Activated CD4-positive, alpha-beta T cell treated with anti-CD3 and anti-CD28 coated beads, Interleukin-2, amount 10 ng/mL, durations not matched to agents 24 days and 14 days (primary cell): ENCODE measurements at regions of chr7 and their contacts with region 1.

Region 1: GRCh38 chr7:66075590-66076461 is at the start of gene ASL:
- DNase-seq: peak; percentile 98
- H3K4me3 Mint-ChIP-seq: peak within 1 kb of the TSS; percentile 89
- H3K27ac Mint-ChIP-seq: peak within 1 kb of the TSS; percentile 65
- H3K4me1 Mint-ChIP-seq: peaks cover 18% of the 10 kb centered on the region
- H3K27me3 Mint-ChIP-seq: peaks cover 2% of the 10 kb centered on the region
- total RNA-seq, gene ASL: 37.8 and 40.5 TPM in 2 replicates

Region 2: GRCh38 chr7:65872776-65873581 is 202.8 kb before region 1 on chr7 and contains the start of gene VKORC1L1:
- intact Hi-C with region 1: loop called (anchors 2 kb)
- DNase-seq: peak; percentile 98
- H3K4me3 Mint-ChIP-seq: peak within 1 kb of the TSS; percentile 87
- H3K27ac Mint-ChIP-seq: peak within 1 kb of the TSS; percentile 88
- H3K4me1 Mint-ChIP-seq: peaks cover 8% of the 10 kb centered on the region
- H3K27me3 Mint-ChIP-seq: peaks cover 1% of the 10 kb centered on the region
- total RNA-seq, gene VKORC1L1: 27.9 and 31.0 TPM in 2 replicates

Region 3: DNA sequence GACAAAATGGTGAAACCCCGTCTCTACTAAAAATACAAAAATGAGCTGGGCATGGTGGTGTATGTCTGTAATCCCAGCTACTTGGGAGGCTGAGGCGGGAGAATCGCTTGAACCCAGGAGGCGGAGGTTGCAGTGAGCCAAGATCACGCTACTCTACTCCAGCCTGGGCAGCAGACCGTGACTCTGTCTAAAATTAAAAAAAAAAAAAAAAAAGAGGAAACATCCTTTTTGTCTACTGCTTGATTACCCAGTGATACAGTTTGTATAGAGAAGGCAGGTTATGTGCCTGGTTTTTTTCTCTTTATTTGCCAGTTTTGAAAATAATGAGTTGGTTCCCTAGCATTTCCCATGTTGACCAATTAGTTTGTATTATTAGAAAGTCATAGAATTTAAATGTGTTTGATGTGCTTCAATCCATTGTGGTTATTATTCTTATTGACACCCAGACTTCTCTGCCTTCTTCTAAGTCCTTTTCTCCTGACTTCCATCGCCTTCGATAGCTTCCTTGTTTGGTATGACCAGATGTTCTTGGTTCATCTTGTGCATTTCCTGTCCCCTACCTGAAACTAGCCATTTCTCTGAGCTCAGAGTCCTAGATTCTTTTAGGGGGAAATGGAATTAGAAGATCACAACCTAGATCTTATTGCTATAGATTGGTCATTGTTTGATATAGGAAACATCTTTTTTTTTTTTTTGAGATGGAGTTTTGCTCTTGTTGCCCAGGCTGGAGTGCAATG is 159.7 kb before region 1 on chr7:
- intact Hi-C with region 1: no loop called
- DNase-seq: no peak
- H3K4me3 Mint-ChIP-seq: no peak overlapping the region
- H3K27ac Mint-ChIP-seq: no peak overlapping the region
- H3K4me1 Mint-ChIP-seq: peaks cover 7% of the 10 kb centered on the region
- H3K27me3 Mint-ChIP-seq: no peaks in the 10 kb centered on the region

Region 4: GRCh38 chr7:66114793-66115649 is 39.2 kb after region 1 on chr7 and contains the start of gene CRCP:
- intact Hi-C with region 1: loop called (anchors 2 kb)
- DNase-seq: peak; percentile 95
- H3K4me3 Mint-ChIP-seq: peak within 1 kb of the TSS; percentile 100
- H3K27ac Mint-ChIP-seq: peak within 1 kb of the TSS; percentile 98
- H3K4me1 Mint-ChIP-seq: peaks cover 37% of the 10 kb centered on the region
- H3K27me3 Mint-ChIP-seq: no peaks in the 10 kb centered on the region
- total RNA-seq, gene CRCP: 37.2 and 41.9 TPM in 2 replicates

Region 5: GRCh38 chr7:67535241-67535989 is 1459.6 kb after region 1 on chr7:
- intact Hi-C with region 1: no loop called
- DNase-seq: no peak
- H3K4me3 Mint-ChIP-seq: no peak overlapping the region
- H3K27ac Mint-ChIP-seq: no peak overlapping the region
- H3K4me1 Mint-ChIP-seq: no peaks in the 10 kb centered on the region
- H3K27me3 Mint-ChIP-seq: no peaks in the 10 kb centered on the region